ENCODE measurements at regions of chrX and their contacts with region 1.

Region 1: DNA sequence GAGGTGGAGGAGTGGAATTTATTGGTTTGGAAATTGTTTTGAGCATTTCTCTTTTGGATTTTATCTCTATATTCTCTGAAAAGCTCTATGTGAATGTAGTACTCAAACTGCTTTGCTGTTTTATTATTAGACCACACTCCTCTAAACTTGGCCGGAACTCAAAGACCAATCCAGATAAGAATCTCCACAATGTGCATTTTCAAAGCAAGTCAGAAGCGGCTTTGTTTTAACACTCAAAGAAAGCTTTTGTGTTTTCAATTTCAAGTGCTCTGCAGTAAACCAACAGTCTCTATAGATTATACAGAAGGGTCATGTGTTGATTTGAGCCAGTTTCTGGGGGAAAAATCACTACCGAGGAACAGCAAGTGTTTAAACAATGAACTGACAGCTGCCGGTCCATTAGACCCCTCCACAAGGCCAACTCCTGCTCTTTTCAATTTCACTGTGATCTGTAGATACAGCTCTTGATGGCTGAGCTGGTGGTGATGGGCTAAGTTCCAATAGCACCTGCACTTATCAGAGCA is 79.4 kb downstream of the FTHL17 start:
- DNase-seq: no peak
- H3K4me3 ChIP-seq: no peak overlapping the region
- H3K27ac ChIP-seq: no peak overlapping the region
- H3K4me1 ChIP-seq: no peaks in the 10 kb centered on the region
- H3K27me3 ChIP-seq: no peaks in the 10 kb centered on the region
- CTCF ChIP-seq: no peak
- POLR2A ChIP-seq: no peak

Region 2: GRCh38 chrX:29787656-29788055 is 1204.8 kb before region 1 on chrX:
- intact Hi-C with region 1: loop called (anchors 5 kb)
- DNase-seq: no peak
- H3K4me3 ChIP-seq: no peak overlapping the region
- H3K27ac ChIP-seq: no peak overlapping the region
- H3K4me1 ChIP-seq: no peaks in the 10 kb centered on the region
- H3K27me3 ChIP-seq: no peaks in the 10 kb centered on the region
- CTCF ChIP-seq: no peak
- POLR2A ChIP-seq: no peak

Region 3: DNA sequence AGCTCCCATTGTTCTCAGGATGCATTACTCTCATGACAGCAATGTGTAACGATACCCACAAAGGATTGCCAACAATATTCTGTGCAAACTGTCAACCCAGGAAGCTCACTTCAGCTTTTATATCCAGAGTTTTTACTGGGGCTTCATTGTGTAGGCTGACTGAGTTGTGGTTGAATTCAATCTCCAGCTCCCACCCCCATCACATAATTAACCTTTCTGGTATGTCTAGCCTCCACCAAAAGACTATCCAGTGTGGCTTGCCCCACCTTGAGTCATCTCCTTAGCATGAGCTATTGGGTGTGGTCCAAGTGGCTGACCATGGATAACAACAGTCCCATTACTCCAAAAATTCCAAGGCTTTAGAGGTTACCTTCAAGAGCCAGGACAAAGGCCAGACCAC is 85.7 kb before region 1 on chrX:
- intact Hi-C with region 1: no loop called
- DNase-seq: no peak
- H3K4me3 ChIP-seq: no peak overlapping the region
- H3K27ac ChIP-seq: no peak overlapping the region
- H3K4me1 ChIP-seq: no peaks in the 10 kb centered on the region
- H3K27me3 ChIP-seq: no peaks in the 10 kb centered on the region
- CTCF ChIP-seq: no peak
- POLR2A ChIP-seq: no peak